Cardiac septum (tissue), 1 donor: ENCODE measurements at regions of chr1 and their contacts with region 1.

Region 1: GRCh38 chr1:193406901-193407300 is 220.5 kb upstream of the B3GALT2 start:
- DNase-seq: no peak

Region 2: DNA sequence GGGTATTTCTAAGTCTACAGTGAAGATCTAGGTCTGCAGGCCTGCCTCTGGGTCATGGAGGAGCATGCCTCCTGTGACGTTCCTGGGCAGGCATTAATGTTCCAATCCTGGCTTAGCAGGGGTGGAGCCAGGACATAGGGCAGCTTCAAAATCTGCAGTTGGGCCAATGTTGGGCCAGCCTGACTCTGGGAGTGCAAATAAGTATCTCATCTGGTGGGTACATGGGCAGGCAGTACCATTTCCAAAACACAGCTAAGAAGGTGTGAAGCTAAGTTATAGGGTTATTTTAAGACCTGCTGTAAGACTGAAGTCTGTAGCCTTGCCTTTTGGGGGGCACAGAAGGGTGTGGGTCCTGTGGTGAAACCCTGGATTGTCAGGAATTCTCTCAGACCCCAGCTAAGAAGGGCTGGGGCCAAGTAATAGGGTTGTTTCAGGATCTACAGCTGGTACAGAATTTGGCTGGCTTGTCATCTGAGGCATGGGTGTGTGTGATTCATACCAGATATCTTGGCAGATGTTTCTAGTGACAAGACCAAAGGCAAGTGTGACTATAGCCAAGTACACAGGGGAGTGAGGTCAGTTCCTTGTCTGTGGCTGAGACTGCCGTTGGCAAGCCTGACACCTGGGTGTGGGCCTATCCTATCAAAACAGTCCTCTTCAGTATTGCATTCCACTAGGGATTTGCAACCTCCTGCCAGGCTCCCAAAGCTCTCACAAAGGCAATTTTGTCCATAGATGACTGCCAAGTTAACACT is 248.2 kb after region 1 on chr1:
- intact Hi-C with region 1: loop called (anchors 5 kb)
- DNase-seq: no peak

Region 3: GRCh38 chr1:193729429-193729828 is 322.5 kb after region 1 on chr1:
- intact Hi-C with region 1: no loop called
- DNase-seq: no peak